Right ventricle myocardium inferior (tissue), 1 donor: ENCODE measurements at regions of chr1 and their contacts with region 1.

Region 1: GRCh38 chr1:147273409-147274336 is 31.2 kb downstream of the CHD1L start:
- DNase-seq: no peak
- ATAC-seq: peak; percentile 80

Region 2: GRCh38 chr1:147124266-147124665 is 149.4 kb before region 1 on chr1:
- intact Hi-C with region 1: no loop called
- DNase-seq: no peak
- ATAC-seq: no peak

Region 3: DNA sequence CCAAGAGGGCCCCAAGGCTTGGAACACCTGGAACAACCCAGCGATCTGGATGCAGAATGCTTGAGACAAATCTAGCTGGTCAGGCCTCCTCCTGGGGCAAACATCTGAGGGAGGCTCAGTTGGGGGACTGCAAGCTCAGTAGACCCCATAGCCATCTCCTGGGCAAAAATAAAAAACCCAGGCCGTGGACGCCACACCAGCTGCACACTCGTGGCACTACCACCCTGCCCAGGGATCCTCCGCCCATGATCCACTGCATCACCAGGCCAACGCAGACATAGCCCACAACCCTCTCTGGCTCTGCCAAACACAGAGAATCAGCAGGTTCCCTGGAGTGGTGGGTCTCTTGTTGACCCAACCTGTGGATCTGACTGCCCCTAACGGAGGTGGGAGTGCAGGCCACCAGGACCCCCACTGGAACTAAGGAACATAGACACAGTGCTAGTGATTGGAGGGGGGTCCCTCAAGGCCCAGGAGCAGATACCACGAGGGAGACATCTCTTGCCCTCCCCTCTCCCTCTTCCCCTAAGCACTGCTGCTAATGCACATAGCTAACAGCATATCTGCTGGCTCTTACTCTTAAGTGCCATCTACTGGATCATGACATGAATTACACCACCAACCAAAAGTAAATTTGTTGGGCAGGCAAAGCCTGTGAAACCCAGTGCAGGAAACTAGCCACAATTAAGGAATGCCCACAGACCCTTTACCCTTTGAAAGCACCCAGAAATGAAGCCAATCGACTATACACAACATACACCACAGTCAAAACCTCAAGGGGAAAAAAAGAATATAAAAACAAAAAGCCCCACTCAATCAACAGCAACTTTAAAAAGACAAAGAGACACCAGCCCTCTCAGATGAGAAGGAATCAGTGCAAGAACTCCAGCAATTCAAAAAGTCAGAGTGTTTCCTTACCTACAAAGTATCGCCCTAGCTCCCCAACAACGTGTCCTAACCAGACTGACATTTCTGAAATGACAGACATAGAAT is 116.2 kb after region 1 on chr1:
- intact Hi-C with region 1: loop called (anchors 5 kb)
- DNase-seq: peak; percentile 17
- ATAC-seq: peak; percentile 34

Region 4: DNA sequence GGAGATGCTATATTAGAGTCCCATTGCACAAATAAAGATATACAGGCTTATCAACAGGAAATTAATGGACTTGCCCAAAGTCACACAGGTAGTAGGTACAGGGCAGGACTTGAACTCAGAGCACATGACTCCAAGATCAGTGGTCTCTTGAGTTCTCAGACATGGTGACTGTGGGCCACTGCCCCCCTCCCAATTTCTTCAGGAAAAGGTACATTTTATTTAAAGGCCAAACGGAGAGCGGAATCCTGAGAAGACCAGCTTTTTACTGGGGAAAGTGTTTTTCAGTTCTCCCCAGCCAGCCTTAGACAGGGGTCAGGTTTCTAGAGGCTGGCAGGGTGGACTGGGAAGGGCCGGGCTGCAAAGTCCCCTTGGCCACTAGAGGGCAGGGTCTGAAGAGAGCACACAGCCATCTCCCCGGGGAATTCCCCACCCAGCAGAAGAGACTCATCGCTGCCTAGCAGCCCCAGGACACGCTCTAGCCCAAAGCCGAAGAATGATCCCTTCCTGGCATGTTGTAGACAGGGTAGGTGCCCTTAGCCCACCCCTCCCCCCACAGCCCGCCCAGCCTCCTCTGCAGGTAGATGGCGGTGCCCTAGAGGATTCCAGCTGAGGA is 367.0 kb after region 1 on chr1:
- intact Hi-C with region 1: loop called (anchors 5 kb)
- DNase-seq: peak; percentile 77
- ATAC-seq: peak; percentile 91